ENCODE measurements at regions of chr5 and their contacts with region 1.

Region 1: GRCh38 chr5:146203011-146203871 is at the start of gene RBM27:
- DNase-seq: peak; percentile 96 to 98 (median 97)
- ATAC-seq: peak; percentile 100
- H3K4me3 ChIP-seq: peak within 1 kb of the TSS; percentile 60 to 98 (median 87)
- H3K27ac ChIP-seq: peak within 1 kb of the TSS; percentile 69 to 92 (median 82)
- H3K4me1 ChIP-seq: peaks cover 0 to 42% (median 23%) of the 10 kb centered on the region in 12 donors
- H3K27me3 ChIP-seq: no peaks in the 10 kb centered on the region
- CTCF ChIP-seq: no peak
- POLR2A ChIP-seq: peak; percentile 52 to 81
- total RNA-seq, gene RBM27: 9.0 to 23.6 (median 12.3) TPM

Region 2: DNA sequence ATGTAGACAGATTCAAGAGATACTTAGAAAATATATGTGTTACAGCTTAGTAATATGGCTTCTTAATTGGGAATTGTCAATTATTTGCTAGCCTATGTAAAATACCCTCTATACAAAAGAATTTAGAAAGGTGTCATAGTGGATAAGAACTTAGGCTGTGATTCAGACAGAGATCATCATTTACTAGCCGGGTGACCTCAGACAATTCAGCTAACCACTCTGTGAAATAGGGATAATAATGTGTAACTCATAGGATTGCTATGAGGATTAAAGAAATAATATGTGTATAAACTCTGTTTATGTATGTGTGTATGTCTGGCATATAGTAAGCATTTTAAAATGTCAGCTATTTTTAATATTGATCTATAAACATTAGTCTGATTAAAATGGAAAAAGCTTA is 14.9 kb before region 1 on chr5:
- intact Hi-C with region 1: loop called in 2 of 10 experiments (anchors 2 kb)
- DNase-seq: no peak
- ATAC-seq: no peak
- H3K4me3 ChIP-seq: no peak overlapping the region
- H3K27ac ChIP-seq: no peak overlapping the region
- H3K4me1 ChIP-seq: peaks cover 0 to 2% (median 0%) of the 10 kb centered on the region in 12 donors
- H3K27me3 ChIP-seq: no peaks in the 10 kb centered on the region
- CTCF ChIP-seq: no peak
- POLR2A ChIP-seq: no peak

Region 3: DNA sequence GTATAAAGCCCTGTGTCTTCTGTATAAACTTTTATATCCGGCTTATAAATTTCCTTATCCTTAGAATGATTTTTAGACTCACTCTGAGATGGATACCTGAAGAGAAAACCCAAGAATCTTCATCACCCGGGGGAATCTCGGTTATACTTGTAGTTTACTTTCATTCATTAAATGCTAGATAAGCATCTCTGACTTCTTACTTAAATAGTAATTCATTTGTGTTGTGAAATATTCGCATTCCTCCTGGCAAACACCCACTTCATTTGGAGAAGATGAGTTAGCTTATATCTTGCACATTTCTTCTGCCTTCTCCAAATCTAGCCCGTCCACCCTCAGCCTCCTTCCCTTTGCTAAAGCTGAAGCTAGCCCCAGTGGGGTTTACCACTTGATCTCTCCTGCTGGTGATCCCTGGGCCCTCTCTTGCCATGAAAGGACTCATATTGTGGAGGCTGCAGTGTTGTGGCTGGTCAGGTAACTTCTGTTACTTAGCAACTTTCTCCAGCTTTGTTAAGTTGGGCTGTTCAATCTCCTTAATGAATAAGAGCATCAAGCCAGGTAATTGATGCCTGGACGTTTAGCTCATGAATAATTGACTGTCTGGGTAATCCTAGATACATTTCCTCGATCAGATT is 124.1 kb after region 1 on chr5:
- intact Hi-C with region 1: no loop called
- DNase-seq: no peak
- ATAC-seq: no peak
- H3K4me3 ChIP-seq: no peak overlapping the region
- H3K27ac ChIP-seq: no peak overlapping the region
- H3K4me1 ChIP-seq: no peaks in the 10 kb centered on the region
- H3K27me3 ChIP-seq: peaks cover 0 to 31% (median 0%) of the 10 kb centered on the region in 9 donors
- CTCF ChIP-seq: no peak
- POLR2A ChIP-seq: no peak